Right ventricle myocardium inferior (tissue), 1 donor: ENCODE measurements at regions of chr9 and their contacts with region 1.

Region 1: DNA sequence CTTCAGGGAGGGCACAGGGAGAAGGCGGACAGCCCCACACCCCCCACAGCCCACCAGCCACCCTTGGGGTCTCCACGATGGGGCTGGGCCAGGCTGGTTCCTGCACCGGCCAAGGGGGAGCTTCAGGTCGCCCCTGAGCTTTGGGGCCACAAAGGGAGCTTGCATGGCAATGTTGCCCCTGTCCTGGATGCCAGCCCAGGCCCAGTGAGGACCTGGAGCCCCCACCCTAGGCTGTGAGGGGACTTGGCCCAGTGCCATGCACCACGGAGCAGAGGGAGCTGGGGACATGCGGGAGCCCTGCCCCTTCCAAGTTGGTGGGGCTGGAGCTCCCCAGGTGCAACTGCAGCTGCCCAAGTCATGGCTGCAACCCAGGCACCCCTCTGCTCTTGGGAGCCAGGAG is 18.4 kb downstream of the TMEM38B start:
- DNase-seq: no peak
- ATAC-seq: peak; percentile 8

Region 2: GRCh38 chr9:105557771-105558610 is 154.8 kb before region 1 on chr9 and contains the start of gene FKTN:
- intact Hi-C with region 1: no loop called
- DNase-seq: peak; percentile 95
- ATAC-seq: peak; percentile 96
- total RNA-seq, gene FKTN: 6.5 TPM

Region 3: GRCh38 chr9:105694190-105694847 is 18.5 kb before region 1 on chr9 and contains the start of gene TMEM38B:
- intact Hi-C with region 1: loop called (anchors 1 kb)
- DNase-seq: peak; percentile 90
- ATAC-seq: peak; percentile 98
- total RNA-seq, gene TMEM38B: 57.2 TPM

Region 4: GRCh38 chr9:107251756-107252322 is 1539.1 kb after region 1 on chr9:
- intact Hi-C with region 1: no loop called
- DNase-seq: no peak
- ATAC-seq: peak; percentile 97